ENCODE measurements at regions of chr6 and their contacts with region 1.

Region 1: GRCh38 chr6:161370880-161371279 is 97.0 kb upstream of the AGPAT4 start:
- DNase-seq: peak; percentile 70 to 82
- H3K4me3 ChIP-seq: no peak overlapping the region
- H3K4me3 Mint-ChIP-seq: no peak overlapping the region
- H3K27ac Mint-ChIP-seq: no peak overlapping the region
- H3K4me1 ChIP-seq: peaks cover 10% of the 10 kb centered on the region
- H3K4me1 Mint-ChIP-seq: peaks cover 10% of the 10 kb centered on the region
- H3K27me3 ChIP-seq: no peaks in the 10 kb centered on the region
- H3K27me3 Mint-ChIP-seq: no peaks in the 10 kb centered on the region
- CTCF ChIP-seq: peak; percentile 86 to 94

Region 2: GRCh38 chr6:160750276-160750689 is 620.6 kb before region 1 on chr6:
- CTCF ChIA-PET with region 1: interaction called, 6 read pairs
- POLR2A ChIA-PET with region 1: no interaction called
- intact Hi-C with region 1: loop called (anchors 2 kb)
- DNase-seq: peak in 1 of 2 experiments; percentile 31
- H3K4me3 ChIP-seq: no peak overlapping the region
- H3K4me3 Mint-ChIP-seq: no peak overlapping the region
- H3K27ac Mint-ChIP-seq: no peak overlapping the region
- H3K4me1 ChIP-seq: no peaks in the 10 kb centered on the region
- H3K4me1 Mint-ChIP-seq: no peaks in the 10 kb centered on the region
- H3K27me3 ChIP-seq: no peaks in the 10 kb centered on the region; the same call in 1 of the 2 replicates
- H3K27me3 Mint-ChIP-seq: peaks cover 12% of the 10 kb centered on the region
- CTCF ChIP-seq: peak; percentile 48 to 73

Region 3: GRCh38 chr6:160992061-160992979 is 378.6 kb before region 1 on chr6:
- CTCF ChIA-PET with region 1: interaction called, 6 read pairs
- POLR2A ChIA-PET with region 1: no interaction called
- intact Hi-C with region 1: loop called (anchors 5 kb)
- DNase-seq: peak; percentile 48 to 64
- H3K4me3 ChIP-seq: peak overlapping the region; percentile 97
- H3K4me3 Mint-ChIP-seq: peak overlapping the region; percentile 96
- H3K27ac Mint-ChIP-seq: peak overlapping the region; percentile 94
- H3K4me1 ChIP-seq: no peaks in the 10 kb centered on the region; the same call in 1 of the 2 replicates
- H3K4me1 Mint-ChIP-seq: no peaks in the 10 kb centered on the region
- H3K27me3 ChIP-seq: no peaks in the 10 kb centered on the region
- H3K27me3 Mint-ChIP-seq: no peaks in the 10 kb centered on the region
- CTCF ChIP-seq: peak; percentile 58 to 76

Region 4: GRCh38 chr6:161139766-161140553 is 230.9 kb before region 1 on chr6:
- CTCF ChIA-PET with region 1: interaction called, 30 read pairs
- POLR2A ChIA-PET with region 1: no interaction called
- intact Hi-C with region 1: loop called (anchors 1 kb)
- DNase-seq: peak; percentile 85 to 88
- H3K4me3 ChIP-seq: no peak overlapping the region
- H3K4me3 Mint-ChIP-seq: no peak overlapping the region
- H3K27ac Mint-ChIP-seq: no peak overlapping the region
- H3K4me1 ChIP-seq: peaks cover 4% of the 10 kb centered on the region; the same call in 1 of the 2 replicates
- H3K4me1 Mint-ChIP-seq: no peaks in the 10 kb centered on the region
- H3K27me3 ChIP-seq: no peaks in the 10 kb centered on the region
- H3K27me3 Mint-ChIP-seq: no peaks in the 10 kb centered on the region
- CTCF ChIP-seq: peak; percentile 67 to 86

Region 5: DNA sequence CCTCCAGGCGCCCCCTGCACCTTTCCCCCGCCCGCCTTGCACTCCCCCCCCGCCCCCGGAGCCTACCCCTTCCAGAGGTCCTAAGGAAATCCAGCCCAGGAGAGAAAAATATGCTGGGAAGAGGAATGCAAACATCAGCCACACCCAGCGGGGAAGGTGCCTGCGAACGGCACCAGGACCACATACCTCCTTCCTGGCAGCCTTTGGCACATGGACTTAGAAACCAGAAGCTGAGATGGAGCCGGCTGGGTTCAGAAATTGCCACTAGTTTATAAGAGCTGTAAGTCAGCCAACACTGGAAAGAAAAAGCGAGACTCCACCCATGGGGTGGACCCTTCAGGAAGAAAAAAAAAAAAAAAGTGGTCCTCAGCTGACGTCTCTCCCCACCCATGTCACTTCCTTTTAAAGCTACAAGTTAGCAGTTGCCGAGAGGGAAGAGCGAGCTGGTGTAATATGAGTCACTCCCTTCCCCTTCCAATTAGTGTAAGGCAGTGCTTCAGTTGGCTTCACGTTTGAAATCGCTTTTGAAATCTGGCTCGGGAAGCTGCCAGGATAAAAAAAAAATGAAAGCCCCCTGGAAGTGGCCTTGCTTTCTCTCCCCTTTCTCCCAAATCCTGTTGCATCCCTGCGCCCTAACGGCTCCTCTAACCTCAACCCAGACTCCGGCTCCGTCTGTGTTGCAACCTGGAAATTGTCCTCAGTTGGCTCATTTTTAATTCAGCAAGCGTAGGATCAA is 97.0 kb before region 1 on chr6 and contains the start of gene AGPAT4:
- CTCF ChIA-PET with region 1: interaction called, 8 read pairs
- POLR2A ChIA-PET with region 1: no interaction called
- intact Hi-C with region 1: loop called (anchors 1 kb)
- DNase-seq: peak; percentile 73 to 75
- H3K4me3 ChIP-seq: peak within 1 kb of the TSS; percentile 45
- H3K4me3 Mint-ChIP-seq: peak within 1 kb of the TSS; percentile 95
- H3K27ac Mint-ChIP-seq: peak within 1 kb of the TSS; percentile 91
- H3K4me1 ChIP-seq: peaks cover 8% of the 10 kb centered on the region
- H3K4me1 Mint-ChIP-seq: peaks cover 18% of the 10 kb centered on the region
- H3K27me3 ChIP-seq: no peaks in the 10 kb centered on the region
- H3K27me3 Mint-ChIP-seq: no peaks in the 10 kb centered on the region
- CTCF ChIP-seq: no peak
- total RNA-seq, gene AGPAT4: 9.2 and 12.0 TPM in 2 replicates

Region 6: DNA sequence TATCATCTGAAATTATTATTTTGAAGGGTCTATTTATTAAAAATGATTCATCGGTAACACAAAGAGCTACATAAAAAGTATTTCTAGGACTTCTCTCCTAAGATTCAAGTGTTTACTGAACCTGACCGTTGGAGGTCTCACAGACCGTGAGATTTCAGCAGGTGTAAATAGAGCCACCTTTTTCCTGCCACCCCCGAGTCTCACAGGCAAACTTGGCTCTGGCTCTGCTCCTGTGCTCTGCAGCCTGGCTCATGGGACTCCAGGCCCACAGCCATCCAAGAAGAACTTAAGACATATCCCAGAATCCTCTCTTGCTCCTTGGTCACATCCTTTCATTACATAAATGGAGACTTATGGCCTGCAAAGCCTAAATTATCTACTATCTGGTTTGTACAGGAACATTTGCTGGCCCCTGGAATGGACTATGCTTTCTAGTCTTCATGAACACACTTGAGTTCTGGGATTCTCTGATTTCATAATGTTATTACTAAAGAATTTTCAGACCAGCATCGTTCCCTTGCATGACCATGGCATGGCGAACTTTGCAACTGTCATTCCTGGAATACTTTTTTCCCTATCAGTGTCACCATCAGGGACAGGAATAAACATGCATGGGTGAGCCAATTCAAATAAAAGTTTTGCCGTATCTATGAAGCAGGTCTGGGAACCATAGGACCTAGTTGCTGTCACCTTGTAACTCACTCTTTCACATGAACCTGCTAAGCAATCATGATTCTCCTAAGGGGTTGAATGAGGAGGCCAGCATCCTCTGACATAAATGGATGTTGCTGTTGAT is 29.0 kb before region 1 on chr6:
- CTCF ChIA-PET with region 1: interaction called, 17 read pairs
- POLR2A ChIA-PET with region 1: no interaction called
- intact Hi-C with region 1: loop called (anchors 1 kb)
- DNase-seq: peak in 1 of 2 experiments; percentile 28
- H3K4me3 ChIP-seq: no peak overlapping the region
- H3K4me3 Mint-ChIP-seq: no peak overlapping the region
- H3K27ac Mint-ChIP-seq: no peak overlapping the region
- H3K4me1 ChIP-seq: peaks cover 51% of the 10 kb centered on the region
- H3K4me1 Mint-ChIP-seq: peaks cover 34% of the 10 kb centered on the region
- H3K27me3 ChIP-seq: no peaks in the 10 kb centered on the region
- H3K27me3 Mint-ChIP-seq: no peaks in the 10 kb centered on the region
- CTCF ChIP-seq: no peak

Measured in Caco-2 (cell line).